OCI-LY7 (cell line): ENCODE measurements at regions of chr2 and their contacts with region 1.

Region 1: GRCh38 chr2:8472545-8473323 is 209.1 kb upstream of the ID2 start:
- DNase-seq: peak; percentile 79
- H3K4me3 ChIP-seq: peak overlapping the region; percentile 42
- H3K27ac ChIP-seq: peak overlapping the region; percentile 97
- H3K4me1 ChIP-seq: peaks cover 80% of the 10 kb centered on the region
- CTCF ChIP-seq: no peak

Region 2: DNA sequence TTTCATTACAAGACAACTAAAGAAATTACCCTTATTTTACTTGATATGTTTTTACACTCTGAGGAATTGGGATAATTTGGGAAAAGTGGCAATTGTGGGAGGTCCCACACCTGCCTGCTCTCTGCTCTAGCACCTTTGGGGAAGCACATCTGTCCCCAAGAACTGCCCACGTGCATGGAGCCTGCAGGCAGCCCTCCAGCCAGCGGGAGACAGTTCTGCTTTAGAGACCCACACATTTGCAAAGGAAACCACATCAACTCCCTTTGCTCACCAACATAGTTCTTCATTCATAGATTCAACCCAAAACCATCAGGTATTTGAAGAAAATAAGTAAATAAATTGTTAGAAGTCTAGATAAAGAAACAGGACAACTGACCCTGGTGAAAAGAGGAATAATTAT is 30.7 kb before region 1 on chr2:
- CTCF ChIA-PET with region 1: no interaction called
- POLR2A ChIA-PET with region 1: interaction called, 5 read pairs
- intact Hi-C with region 1: loop called (anchors 2 kb)
- DNase-seq: peak; percentile 69
- H3K4me3 ChIP-seq: peak overlapping the region; percentile 11
- H3K27ac ChIP-seq: peak overlapping the region; percentile 46
- H3K4me1 ChIP-seq: peaks cover 60% of the 10 kb centered on the region
- CTCF ChIP-seq: no peak